Heart right ventricle (tissue), 16 donors: ENCODE measurements at regions of chr11 and their contacts with region 1.

Region 1: DNA sequence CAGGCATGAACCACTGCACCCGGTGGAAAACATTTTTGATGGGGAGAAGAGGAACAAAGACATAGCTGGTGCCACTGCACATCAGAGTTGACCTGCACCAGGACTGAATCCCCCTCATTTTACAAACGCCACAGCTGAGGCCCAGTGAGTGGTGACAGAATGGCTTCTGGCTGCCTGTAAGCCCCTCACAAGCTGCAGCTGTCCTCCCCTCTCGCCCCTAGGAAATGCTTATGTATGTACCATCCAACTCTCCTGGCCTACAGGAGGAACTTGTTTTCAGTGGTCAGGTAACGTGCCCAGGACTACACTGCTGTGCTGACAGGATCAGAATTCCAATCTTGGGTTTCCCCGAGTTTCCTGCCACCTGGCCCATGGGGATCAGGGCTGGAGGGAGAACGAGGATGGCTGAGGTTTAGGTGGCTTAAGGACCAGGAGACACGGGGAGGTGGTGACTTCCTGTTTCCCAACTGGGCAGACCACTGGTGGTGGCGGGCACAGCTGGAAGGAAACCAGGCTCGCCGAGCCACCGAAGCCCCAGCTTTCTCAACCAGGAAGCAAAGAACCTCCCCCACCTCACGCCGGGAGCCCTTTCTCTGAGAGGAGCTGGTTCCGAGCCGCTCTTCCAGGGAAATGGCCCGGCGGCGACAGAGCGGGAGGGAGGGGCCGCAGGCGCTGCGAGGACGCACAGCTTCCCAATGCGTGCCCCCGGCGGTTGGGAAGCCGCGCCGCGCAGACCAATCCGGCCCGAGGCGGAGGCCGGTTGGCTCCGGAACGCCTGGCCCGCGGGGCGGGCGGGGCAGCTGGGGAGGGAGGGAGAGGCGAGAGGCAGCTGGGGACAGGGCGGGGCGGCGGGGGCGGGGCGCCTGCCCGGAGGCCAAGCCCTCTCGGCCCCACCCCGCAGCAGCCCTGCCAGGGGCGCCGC is 1.0 kb upstream of the LRFN4 start:
- DNase-seq: peak; percentile 93 to 96
- ATAC-seq: peak; percentile 90 to 96 (median 93)
- H3K4me3 ChIP-seq: peak overlapping the region; percentile 53 to 86 (median 70)
- H3K27ac ChIP-seq: peak overlapping the region; percentile 75 to 95 (median 91)
- H3K4me1 ChIP-seq: peaks cover 0 to 15% (median 10%) of the 10 kb centered on the region in 9 donors
- H3K27me3 ChIP-seq: no peaks in the 10 kb centered on the region
- CTCF ChIP-seq: no peak

Region 2: GRCh38 chr11:66958232-66958955 is 102.6 kb after region 1 on chr11 and contains the start of gene PC:
- intact Hi-C with region 1: loop called in 2 of 10 experiments (anchors 2 to 5 kb)
- DNase-seq: peak; percentile 99 to 100
- ATAC-seq: peak; percentile 98 to 100 (median 99)
- H3K4me3 ChIP-seq: peak within 1 kb of the TSS; percentile 9 to 87 (median 64)
- H3K27ac ChIP-seq: peak within 1 kb of the TSS in 9 of 10 donors; percentile 68 to 90 (median 77)
- H3K4me1 ChIP-seq: peaks cover 0 to 31% (median 13%) of the 10 kb centered on the region in 9 donors
- H3K27me3 ChIP-seq: no peaks in the 10 kb centered on the region
- CTCF ChIP-seq: no peak
- total RNA-seq, gene PC: 6.8 to 18.5 (median 11.0) TPM

Region 3: GRCh38 chr11:66976048-66976467 is 120.2 kb after region 1 on chr11:
- intact Hi-C with region 1: no loop called
- DNase-seq: no peak
- ATAC-seq: peak in 2 of 8 donors; percentile 6 to 21
- H3K4me3 ChIP-seq: no peak overlapping the region
- H3K27ac ChIP-seq: no peak overlapping the region
- H3K4me1 ChIP-seq: peaks cover 0 to 9% (median 0%) of the 10 kb centered on the region in 9 donors
- H3K27me3 ChIP-seq: no peaks in the 10 kb centered on the region
- CTCF ChIP-seq: peak in 8 of 9 donors; percentile 12 to 62 (median 39)